SK-N-SH (cell line): ENCODE measurements at regions of chr12 and their contacts with region 1.

Region 1: GRCh38 chr12:54173066-54173726 is 15.6 kb downstream of the SMUG1 start:
- DNase-seq: peak; percentile 85
- H3K4me3 ChIP-seq: peak overlapping the region; percentile 40 to 53
- H3K27ac ChIP-seq: peak overlapping the region in 1 of 2 experiments; percentile 30; a peak in 1 of 4 replicates
- H3K4me1 ChIP-seq: peaks cover 3 to 23% of the 10 kb centered on the region in 2 experiments; a peak in 1 of 4 replicates
- H3K27me3 ChIP-seq: no peaks in the 10 kb centered on the region
- CTCF ChIP-seq: no peak
- EP300 ChIP-seq: no peak
- RAD21 ChIP-seq: no peak

Region 2: GRCh38 chr12:54191550-54192022 is 18.4 kb after region 1 on chr12:
- CTCF ChIA-PET with region 1: interaction called, 53 read pairs
- POLR2A ChIA-PET with region 1: interaction called, 10 read pairs
- DNase-seq: peak; percentile 83
- H3K4me3 ChIP-seq: peak overlapping the region in 1 of 2 experiments; percentile 46; a peak in 1 of 4 replicates
- H3K27ac ChIP-seq: no peak overlapping the region
- H3K4me1 ChIP-seq: peaks cover 17 to 50% of the 10 kb centered on the region in 2 experiments; a peak in 3 of 4 replicates
- H3K27me3 ChIP-seq: no peaks in the 10 kb centered on the region
- CTCF ChIP-seq: peak; percentile 82
- EP300 ChIP-seq: no peak
- RAD21 ChIP-seq: peak; percentile 94

Region 3: DNA sequence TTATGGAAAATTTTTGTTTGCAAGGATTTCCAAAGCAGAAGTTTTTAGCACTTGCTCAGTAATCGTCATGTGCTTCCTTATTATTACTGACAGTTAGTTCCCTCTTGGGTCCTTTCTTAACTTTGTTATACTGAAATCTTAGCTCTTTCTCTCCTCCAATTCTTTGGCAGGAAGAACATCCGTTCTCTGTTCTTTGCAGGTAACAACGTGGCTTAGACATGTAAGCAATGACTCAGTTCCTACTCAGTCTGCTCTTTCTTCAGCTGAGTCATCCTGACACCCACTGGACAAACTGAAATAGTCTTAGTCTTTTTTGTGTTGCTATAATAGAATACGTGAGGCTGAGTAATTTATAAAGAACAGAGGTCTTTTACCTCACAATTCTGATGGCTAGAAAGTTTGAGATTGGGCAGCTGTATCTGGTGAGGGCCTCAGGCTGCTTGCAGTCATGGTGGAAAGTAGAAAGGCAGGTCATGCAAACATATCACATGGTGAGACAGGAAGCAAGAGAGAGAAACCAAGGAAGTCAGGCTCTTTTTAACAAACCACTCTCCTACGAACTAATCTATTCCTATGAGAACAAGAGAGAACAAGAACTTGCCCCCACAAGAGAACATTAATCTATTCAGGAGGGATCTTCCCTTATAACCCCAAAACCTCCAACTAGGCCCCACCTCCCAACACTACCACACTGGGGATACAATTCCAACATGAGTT is 762.2 kb after region 1 on chr12:
- CTCF ChIA-PET with region 1: no interaction called
- POLR2A ChIA-PET with region 1: no interaction called
- DNase-seq: no peak
- H3K4me3 ChIP-seq: no peak overlapping the region
- H3K27ac ChIP-seq: no peak overlapping the region
- H3K4me1 ChIP-seq: no peaks in the 10 kb centered on the region
- H3K27me3 ChIP-seq: peaks cover 11% of the 10 kb centered on the region; the same call in 1 of the 2 replicates
- CTCF ChIP-seq: no peak
- EP300 ChIP-seq: no peak
- RAD21 ChIP-seq: no peak